Mucosa of descending colon (tissue), 3 donors: ENCODE measurements at regions of chr10 and their contacts with region 1.

Region 1: DNA sequence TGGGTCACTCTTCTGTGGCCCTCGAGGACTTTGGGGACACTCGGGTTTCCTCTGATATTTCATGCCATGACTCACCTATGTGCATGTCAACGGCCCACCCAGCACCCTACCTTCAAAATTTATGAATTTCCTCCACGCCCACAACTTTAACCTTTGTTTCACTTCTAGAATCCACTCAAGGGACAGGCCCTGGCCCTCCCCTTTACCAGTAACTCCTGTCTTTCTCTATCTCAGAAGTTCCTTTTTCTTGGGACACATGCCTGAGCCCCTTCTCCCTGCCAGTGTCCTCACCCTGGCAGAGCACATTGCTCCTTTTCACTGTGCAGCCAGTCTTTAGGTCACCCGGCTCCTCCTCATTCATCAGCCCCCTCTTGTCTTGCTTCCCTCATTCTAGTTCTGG is 282.5 kb upstream of the KLF6 start:
- DNase-seq: peak in 2 of 3 donors; percentile 54 to 79
- ATAC-seq: peak; percentile 89
- H3K4me3 ChIP-seq: no peak overlapping the region
- H3K4me1 ChIP-seq: peaks cover 42% of the 10 kb centered on the region
- CTCF ChIP-seq: no peak

Region 2: DNA sequence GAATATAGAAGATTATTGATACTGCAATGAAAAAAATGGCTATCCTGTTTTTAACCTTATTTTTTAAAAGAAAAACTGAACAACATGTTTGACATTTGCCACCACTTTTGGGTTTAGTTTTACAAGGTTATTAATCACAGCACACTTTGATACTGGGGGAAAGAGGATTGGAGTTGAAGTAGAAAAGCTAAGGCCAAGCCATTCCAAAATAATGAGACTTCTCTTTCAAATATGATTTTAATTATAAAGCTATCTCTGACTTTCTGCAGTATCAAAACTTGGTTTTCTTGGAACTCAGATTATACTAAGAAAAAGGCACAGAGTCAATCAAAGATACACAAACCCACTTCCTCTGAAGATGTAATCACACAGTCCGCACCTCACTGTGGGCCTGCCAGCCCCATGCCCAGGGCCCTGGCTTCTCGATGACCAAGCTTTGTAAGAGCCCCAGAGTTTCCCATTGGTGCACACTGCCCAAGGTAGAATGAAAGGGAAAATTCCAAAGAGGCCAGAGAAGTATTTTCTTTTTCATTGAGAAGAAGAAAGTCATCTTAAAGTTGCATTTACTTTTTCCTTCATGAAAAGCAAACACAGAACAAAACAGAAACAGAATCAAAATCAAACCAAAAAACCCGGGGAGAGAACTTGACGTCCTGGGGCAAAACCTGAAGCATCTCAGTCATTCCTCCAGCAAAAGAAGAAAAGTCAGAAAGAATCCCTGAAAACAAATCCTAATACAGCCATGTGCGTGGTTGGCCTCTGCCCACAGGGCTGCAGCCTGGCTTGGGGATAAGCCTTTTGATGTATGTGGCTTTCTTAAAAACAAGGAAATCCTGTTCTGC is 94.8 kb before region 1 on chr10:
- intact Hi-C with region 1: loop called in 1 of 2 experiments (anchors 10 kb)
- DNase-seq: no peak
- ATAC-seq: peak; percentile 55
- H3K4me3 ChIP-seq: no peak overlapping the region
- H3K4me1 ChIP-seq: peaks cover 14% of the 10 kb centered on the region
- CTCF ChIP-seq: no peak

Region 3: DNA sequence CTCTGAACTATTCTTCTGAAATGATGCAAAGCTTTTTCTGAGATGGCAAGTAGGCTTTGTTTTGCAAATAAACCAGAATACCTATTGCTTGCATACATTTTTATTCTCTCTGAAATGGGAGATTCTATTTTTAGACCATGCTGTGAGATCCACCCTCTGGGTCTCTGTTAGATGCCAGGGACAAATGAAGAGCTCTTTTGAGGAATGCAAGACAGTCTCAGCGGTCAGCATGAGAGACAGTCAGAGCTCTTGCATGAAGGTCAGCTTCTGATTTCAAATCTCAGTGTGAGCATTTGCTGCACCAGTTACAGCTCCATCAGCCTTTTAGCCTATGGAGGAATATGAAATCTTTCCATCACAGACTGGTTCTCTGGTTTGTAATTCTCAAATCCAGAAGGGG is 147.4 kb after region 1 on chr10:
- intact Hi-C with region 1: loop called in 1 of 2 experiments (anchors 10 kb)
- DNase-seq: no peak
- ATAC-seq: no peak
- H3K4me3 ChIP-seq: no peak overlapping the region
- H3K4me1 ChIP-seq: peaks cover 31% of the 10 kb centered on the region
- CTCF ChIP-seq: no peak